Posterior vena cava (tissue), 2 donors: ENCODE measurements at regions of chr1 and their contacts with region 1.

Region 1: GRCh38 chr1:59032228-59032627 is 248.4 kb upstream of the JUN start:
- DNase-seq: no peak

Region 2: DNA sequence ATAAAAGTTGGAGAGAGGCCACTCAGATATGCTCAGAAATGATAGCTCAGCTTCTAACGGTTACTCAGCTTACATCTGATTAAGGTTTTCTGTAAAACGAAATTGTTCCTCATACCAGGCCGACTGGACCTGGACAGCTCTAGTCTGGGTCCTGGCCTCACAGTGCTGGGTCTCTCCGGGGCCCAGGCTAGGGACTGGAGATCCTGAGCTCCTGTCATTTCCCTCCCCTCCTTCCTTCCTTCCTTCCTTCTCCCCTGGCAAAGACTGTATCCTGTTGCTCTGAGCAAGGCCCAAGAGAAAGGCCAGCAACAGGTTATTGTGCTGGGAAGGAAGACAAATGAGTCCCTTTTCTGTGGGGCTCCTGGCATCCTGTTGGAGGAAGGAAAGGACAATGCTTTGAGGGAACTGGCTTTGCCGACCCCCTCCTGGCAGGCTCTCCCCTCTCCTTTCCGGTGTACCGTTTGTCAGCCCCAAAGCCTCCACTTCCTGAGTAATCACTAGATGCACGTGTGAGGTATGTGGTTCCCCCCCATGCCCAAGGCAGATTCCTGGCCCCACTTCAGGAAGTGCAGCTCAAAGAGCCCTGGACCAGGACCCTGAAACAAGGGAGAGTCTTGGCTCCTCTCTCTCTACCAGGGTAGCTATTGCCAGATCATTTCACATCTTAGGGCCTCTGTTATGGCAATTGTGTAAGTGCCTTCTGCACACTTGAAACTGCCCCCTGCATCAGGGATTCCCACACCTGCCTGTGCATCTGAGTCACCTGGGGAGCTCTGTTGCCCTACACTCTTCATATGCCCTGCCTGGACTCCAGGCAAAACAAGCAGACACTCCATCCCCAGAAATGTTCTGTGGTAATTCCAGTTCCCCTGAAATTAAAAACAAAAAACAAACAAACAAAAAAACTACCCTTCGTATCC is 52.0 kb after region 1 on chr1:
- intact Hi-C with region 1: no loop called
- DNase-seq: no peak

Region 3: DNA sequence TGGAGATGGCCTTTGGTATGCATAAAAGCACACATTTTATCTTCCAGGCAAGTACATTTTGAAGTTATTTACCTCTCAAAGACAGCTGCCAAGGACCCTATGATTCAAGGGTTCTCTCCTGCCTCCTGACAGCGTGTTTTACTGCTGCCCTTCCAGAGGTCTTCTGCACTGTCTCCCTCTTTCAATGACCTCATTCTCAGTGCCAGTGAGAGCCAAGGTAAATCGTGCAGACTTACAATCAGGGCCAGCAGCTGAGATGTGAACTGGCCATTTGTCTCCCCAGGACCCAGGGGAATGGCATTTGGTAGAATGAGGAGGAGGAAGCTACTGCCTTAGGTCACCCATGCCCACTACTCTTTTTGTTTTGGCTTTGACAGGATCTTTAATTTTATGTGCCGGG is 180.5 kb after region 1 on chr1:
- intact Hi-C with region 1: loop called in 1 of 2 experiments (anchors 2 kb)
- DNase-seq: no peak